ENCODE measurements at regions of chr3 and their contacts with region 1.

Region 1: GRCh38 chr3:3200632-3201212 is 21.2 kb upstream of the CRBN start:
- DNase-seq: peak in 1 of 2 donors; percentile 46
- ATAC-seq: peak in 2 of 8 donors; percentile 67 to 74
- H3K4me3 ChIP-seq: no peak overlapping the region
- H3K27ac ChIP-seq: no peak overlapping the region
- H3K4me1 ChIP-seq: no peaks in the 10 kb centered on the region
- H3K27me3 ChIP-seq: peaks cover 0 to 10% (median 0%) of the 10 kb centered on the region in 7 donors
- CTCF ChIP-seq: peak; percentile 40 to 87 (median 79)

Region 2: DNA sequence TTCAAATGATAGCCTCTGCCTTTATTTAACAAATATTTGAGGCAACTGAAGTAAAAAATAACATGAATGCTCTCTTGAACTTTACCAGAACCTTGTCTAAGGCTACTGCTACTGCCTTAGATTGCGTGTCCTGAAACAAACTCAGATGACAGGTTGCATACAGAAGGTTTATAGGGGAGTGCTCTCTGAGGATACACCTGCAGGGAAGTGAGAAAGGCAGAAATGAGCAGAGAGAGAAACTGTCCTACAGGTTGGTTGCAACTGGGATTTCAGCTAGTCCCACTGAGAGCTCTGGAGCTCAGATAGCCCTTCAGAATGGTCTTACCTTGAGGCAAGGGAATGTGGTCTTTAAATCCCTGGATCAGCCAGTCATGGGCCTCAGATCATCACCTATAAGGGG is 256.1 kb before region 1 on chr3:
- intact Hi-C with region 1: no loop called
- DNase-seq: no peak
- ATAC-seq: no peak
- H3K4me3 ChIP-seq: no peak overlapping the region
- H3K27ac ChIP-seq: no peak overlapping the region
- H3K4me1 ChIP-seq: no peaks in the 10 kb centered on the region
- H3K27me3 ChIP-seq: no peaks in the 10 kb centered on the region
- CTCF ChIP-seq: no peak

Region 3: GRCh38 chr3:3998140-3998922 is 797.6 kb after region 1 on chr3:
- intact Hi-C with region 1: loop called in 6 of 10 experiments (anchors 5 kb)
- DNase-seq: no peak
- ATAC-seq: no peak
- H3K4me3 ChIP-seq: no peak overlapping the region
- H3K27ac ChIP-seq: no peak overlapping the region
- H3K4me1 ChIP-seq: no peaks in the 10 kb centered on the region
- H3K27me3 ChIP-seq: no peaks in the 10 kb centered on the region
- CTCF ChIP-seq: peak; percentile 14 to 57 (median 46)

Region 4: DNA sequence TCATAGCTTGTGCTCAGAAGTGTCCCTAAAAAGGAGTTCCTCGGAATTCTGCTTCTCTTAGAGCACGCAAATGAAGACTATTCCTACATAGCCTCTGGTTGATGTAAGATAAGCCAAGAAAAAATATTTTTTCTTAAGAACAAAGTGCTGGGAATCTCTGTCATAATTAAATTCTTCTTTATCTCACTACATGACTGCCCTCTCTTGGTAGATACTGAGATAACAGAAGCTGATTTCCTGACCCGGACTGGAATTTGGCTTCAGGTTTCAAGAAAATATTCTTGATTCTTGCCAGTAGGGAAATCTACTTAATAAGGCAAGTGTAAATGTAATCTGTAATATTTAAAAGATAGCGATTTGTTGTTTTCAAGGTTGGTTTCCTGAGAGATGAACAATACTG is 1071.1 kb after region 1 on chr3:
- intact Hi-C with region 1: loop called in 1 of 10 experiments (anchors 5 kb)
- DNase-seq: no peak
- ATAC-seq: peak in 2 of 8 donors; percentile 33 to 38
- H3K4me3 ChIP-seq: no peak overlapping the region
- H3K27ac ChIP-seq: peak overlapping the region in 1 of 10 donors; percentile 8
- H3K4me1 ChIP-seq: peaks cover 0 to 19% (median 0%) of the 10 kb centered on the region in 9 donors
- H3K27me3 ChIP-seq: no peaks in the 10 kb centered on the region
- CTCF ChIP-seq: peak in 7 of 9 donors; percentile 41 to 60 (median 50)

Region 5: GRCh38 chr3:4284865-4285264 is 1084.1 kb after region 1 on chr3:
- intact Hi-C with region 1: loop called (anchors 1 to 5 kb)
- DNase-seq: no peak
- ATAC-seq: no peak
- H3K4me3 ChIP-seq: no peak overlapping the region
- H3K27ac ChIP-seq: no peak overlapping the region
- H3K4me1 ChIP-seq: no peaks in the 10 kb centered on the region
- H3K27me3 ChIP-seq: no peaks in the 10 kb centered on the region
- CTCF ChIP-seq: no peak

Region 6: DNA sequence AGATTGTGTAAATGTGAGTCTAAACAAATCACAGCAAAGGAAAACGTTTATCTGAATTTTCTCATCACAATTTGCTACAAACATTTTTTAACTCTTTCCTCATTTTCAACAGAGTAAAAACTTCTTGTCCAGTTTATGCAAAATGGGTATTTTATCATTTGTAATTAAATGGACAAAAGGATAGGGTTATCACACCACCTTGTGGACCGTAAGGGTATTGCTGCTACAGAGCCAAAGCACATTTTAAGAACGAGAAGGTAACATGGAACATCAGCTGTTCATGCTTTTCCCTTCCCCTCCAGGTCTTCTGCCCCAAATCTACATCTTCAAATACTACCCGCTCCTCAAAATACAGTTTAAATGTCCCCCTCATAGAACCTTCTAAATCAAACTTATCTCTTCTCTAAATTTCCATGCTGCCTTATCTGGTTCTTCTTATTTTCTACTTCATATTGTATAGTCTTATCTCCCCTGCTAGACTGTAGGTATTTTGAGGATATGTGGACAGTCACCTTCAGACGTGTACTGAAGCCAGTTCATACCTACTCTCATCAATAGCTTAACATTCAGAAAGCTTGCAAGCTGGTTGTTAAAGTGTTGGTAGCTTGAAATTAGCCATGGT is 1089.7 kb after region 1 on chr3:
- intact Hi-C with region 1: loop called (anchors 1 to 5 kb)
- DNase-seq: no peak
- ATAC-seq: no peak
- H3K4me3 ChIP-seq: no peak overlapping the region
- H3K27ac ChIP-seq: no peak overlapping the region
- H3K4me1 ChIP-seq: no peaks in the 10 kb centered on the region
- H3K27me3 ChIP-seq: no peaks in the 10 kb centered on the region
- CTCF ChIP-seq: peak; percentile 79 to 96 (median 92)